Tibial artery (tissue), 4 donors: ENCODE measurements at regions of chr1 and their contacts with region 1.

Region 1: DNA sequence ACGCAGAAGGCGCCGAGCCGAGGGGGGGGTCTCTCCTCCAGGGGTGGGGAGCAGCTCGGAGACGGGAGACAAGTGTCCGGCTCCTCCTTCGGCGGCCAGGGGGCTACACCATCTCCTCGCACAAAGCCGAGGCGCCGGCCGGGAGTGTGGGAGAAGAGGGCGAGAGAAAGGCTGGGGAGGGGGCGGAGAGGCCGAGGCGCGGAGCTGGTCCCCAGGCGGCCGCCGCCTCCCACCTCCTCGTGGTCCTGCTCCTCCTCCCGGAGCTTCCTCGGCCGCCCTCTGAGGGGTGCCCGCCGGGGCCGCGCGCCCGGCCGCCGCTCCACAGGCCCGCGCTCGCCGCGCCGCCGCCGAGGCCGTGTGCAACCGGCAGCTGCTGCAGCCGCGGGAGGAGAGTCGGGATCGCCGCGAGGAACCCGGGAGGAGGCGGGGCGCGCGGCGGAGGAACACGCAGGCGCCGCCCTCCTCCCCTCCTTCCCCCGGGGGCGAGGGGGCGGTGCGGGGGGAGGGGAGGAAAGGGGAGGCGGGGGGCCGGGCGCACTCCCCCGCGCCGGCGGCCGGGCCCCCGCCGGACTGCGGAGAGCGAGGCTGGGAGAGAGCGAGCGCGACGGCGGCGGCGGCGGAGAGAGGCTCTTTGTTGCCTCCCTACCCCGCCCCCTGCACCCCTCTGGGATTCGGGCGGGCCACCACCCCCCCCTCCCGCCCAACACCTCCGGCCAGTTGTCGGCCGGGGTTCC is at the start of gene ENAH:
- DNase-seq: peak; percentile 75 to 92
- H3K4me3 ChIP-seq: peak within 1 kb of the TSS; percentile 91 to 99
- H3K27ac ChIP-seq: peak within 1 kb of the TSS; percentile 100
- H3K4me1 ChIP-seq: peaks cover 0 to 48% (median 36%) of the 10 kb centered on the region in 4 donors
- H3K27me3 ChIP-seq: no peaks in the 10 kb centered on the region
- CTCF ChIP-seq: peak in 1 of 2 experiments; percentile 13

Region 2: GRCh38 chr1:225480825-225481434 is 172.0 kb before region 1 on chr1:
- intact Hi-C with region 1: loop called (anchors 10 kb)
- DNase-seq: peak in 1 of 2 donors; percentile 66
- H3K4me3 ChIP-seq: no peak overlapping the region
- H3K27ac ChIP-seq: no peak overlapping the region
- H3K4me1 ChIP-seq: peaks cover 0 to 37% (median 16%) of the 10 kb centered on the region in 4 donors
- H3K27me3 ChIP-seq: no peaks in the 10 kb centered on the region
- CTCF ChIP-seq: peak; percentile 37 to 63

Region 3: GRCh38 chr1:225603538-225604354 is 49.1 kb before region 1 on chr1:
- intact Hi-C with region 1: loop called (anchors 10 kb)
- DNase-seq: no peak
- H3K4me3 ChIP-seq: no peak overlapping the region
- H3K27ac ChIP-seq: peak overlapping the region; percentile 54 to 57
- H3K4me1 ChIP-seq: peaks cover 0 to 76% (median 21%) of the 10 kb centered on the region in 4 donors
- H3K27me3 ChIP-seq: no peaks in the 10 kb centered on the region
- CTCF ChIP-seq: no peak

Region 4: DNA sequence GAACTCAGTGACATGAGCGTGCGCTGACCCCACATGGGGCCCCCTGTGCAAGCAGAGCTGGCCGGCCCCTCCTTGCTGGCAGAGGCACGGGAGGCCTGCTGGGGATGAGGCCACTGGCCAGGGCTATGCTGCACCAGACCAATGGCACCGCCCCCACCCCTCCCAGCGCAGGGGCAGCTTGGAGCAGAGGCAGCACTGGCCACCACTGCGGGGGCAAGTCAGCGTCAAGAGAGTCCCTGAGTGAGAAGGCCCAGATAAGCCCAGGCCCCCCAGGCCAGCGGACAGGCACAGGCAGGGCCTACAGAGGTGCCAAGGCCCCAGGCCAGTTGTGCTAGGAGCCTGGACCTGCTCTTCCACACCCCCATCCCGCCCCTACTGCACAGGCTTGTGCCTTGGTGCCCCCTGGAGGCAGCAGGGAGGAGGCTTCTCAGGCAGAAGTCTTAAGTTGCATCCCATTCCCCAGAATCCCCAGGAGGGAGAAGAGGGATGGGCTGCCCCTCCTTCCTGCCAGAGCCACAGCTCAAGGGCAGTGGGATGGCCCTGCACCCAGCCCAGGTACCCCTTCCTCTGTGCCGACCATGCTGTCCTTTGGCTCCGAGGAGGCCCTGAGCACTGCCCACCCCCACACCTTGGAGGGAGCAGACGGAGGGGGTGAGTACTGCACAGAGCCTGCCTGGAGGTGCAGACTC is 192.8 kb after region 1 on chr1:
- intact Hi-C with region 1: loop called (anchors 10 kb)
- DNase-seq: peak; percentile 82 to 92
- H3K4me3 ChIP-seq: no peak overlapping the region
- H3K27ac ChIP-seq: peak overlapping the region; percentile 11 to 54
- H3K4me1 ChIP-seq: peaks cover 0 to 9% (median 6%) of the 10 kb centered on the region in 4 donors
- H3K27me3 ChIP-seq: no peaks in the 10 kb centered on the region
- CTCF ChIP-seq: peak; percentile 83 to 85